Tibial artery (tissue), 4 donors: ENCODE measurements at regions of chr3 and their contacts with region 1.

Region 1: GRCh38 chr3:50272911-50273693 is 4.2 kb downstream of the SEMA3B start:
- DNase-seq: peak; percentile 81 to 91
- H3K4me3 ChIP-seq: peak overlapping the region; percentile 22 to 44
- H3K27ac ChIP-seq: no peak overlapping the region
- H3K4me1 ChIP-seq: peaks cover 0 to 53% (median 33%) of the 10 kb centered on the region in 4 donors
- H3K27me3 ChIP-seq: no peaks in the 10 kb centered on the region
- CTCF ChIP-seq: peak; percentile 98 to 99

Region 2: GRCh38 chr3:50121416-50122032 is 151.6 kb before region 1 on chr3:
- intact Hi-C with region 1: loop called (anchors 10 kb)
- DNase-seq: peak; percentile 57 to 82
- H3K4me3 ChIP-seq: no peak overlapping the region
- H3K27ac ChIP-seq: no peak overlapping the region
- H3K4me1 ChIP-seq: peaks cover 0 to 47% (median 29%) of the 10 kb centered on the region in 4 donors
- H3K27me3 ChIP-seq: no peaks in the 10 kb centered on the region
- CTCF ChIP-seq: peak; percentile 67 to 95

Region 3: GRCh38 chr3:50192689-50193141 is 80.4 kb before region 1 on chr3:
- intact Hi-C with region 1: loop called (anchors 2 kb)
- DNase-seq: peak; percentile 62 to 79
- H3K4me3 ChIP-seq: no peak overlapping the region
- H3K27ac ChIP-seq: no peak overlapping the region
- H3K4me1 ChIP-seq: peaks cover 0 to 28% (median 19%) of the 10 kb centered on the region in 4 donors
- H3K27me3 ChIP-seq: peaks cover 2 to 41% of the 10 kb centered on the region in 2 donors
- CTCF ChIP-seq: peak; percentile 89 to 96

Region 4: GRCh38 chr3:50227390-50228183 is 45.5 kb before region 1 on chr3:
- intact Hi-C with region 1: loop called (anchors 1 kb)
- DNase-seq: peak; percentile 87 to 95
- H3K4me3 ChIP-seq: peak overlapping the region; percentile 67 to 69
- H3K27ac ChIP-seq: peak overlapping the region; percentile 39 to 61
- H3K4me1 ChIP-seq: peaks cover 0 to 32% (median 18%) of the 10 kb centered on the region in 4 donors
- H3K27me3 ChIP-seq: peaks cover 0 to 4% of the 10 kb centered on the region in 2 donors
- CTCF ChIP-seq: peak; percentile 91

Region 5: DNA sequence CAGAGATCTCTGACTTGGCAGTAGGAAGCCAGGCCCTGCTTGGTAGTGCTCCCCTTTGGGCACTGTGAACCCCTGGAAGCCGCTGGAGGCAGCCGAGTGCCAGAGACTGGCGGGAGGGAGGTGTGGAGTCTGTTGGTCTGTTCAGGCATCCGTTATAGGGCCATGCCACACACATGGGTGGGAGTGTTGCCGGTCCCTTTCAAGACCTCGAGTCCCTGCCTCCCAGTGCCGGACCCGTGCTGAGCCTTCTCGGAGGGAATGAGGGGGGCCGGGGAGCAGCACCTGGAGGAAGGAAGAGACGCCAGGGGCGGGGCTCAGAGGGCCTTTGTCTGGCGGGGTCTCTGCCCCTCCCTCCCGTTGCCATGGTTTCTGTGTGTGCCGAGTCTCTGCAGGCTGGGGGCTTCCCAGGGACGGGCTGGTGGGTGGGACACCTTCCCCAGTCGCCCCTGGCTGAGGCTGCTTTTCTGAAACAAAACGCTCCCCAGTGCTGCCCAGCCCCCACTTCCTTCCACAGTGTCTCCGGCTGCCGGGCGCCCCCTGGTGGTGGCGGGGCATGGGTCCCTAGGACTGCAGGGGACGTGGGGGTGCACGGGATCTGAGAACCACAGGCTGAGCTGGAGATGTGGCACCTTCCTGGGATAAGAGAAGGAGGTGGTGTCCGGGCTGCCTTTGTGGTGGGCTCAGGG is 27.1 kb before region 1 on chr3:
- intact Hi-C with region 1: loop called (anchors 5 kb)
- DNase-seq: peak; percentile 92 to 94
- H3K4me3 ChIP-seq: peak overlapping the region; percentile 39 to 49
- H3K27ac ChIP-seq: peak overlapping the region; percentile 63 to 86
- H3K4me1 ChIP-seq: peaks cover 0 to 100% (median 92%) of the 10 kb centered on the region in 4 donors
- H3K27me3 ChIP-seq: no peaks in the 10 kb centered on the region
- CTCF ChIP-seq: peak; percentile 95 to 97

Region 6: DNA sequence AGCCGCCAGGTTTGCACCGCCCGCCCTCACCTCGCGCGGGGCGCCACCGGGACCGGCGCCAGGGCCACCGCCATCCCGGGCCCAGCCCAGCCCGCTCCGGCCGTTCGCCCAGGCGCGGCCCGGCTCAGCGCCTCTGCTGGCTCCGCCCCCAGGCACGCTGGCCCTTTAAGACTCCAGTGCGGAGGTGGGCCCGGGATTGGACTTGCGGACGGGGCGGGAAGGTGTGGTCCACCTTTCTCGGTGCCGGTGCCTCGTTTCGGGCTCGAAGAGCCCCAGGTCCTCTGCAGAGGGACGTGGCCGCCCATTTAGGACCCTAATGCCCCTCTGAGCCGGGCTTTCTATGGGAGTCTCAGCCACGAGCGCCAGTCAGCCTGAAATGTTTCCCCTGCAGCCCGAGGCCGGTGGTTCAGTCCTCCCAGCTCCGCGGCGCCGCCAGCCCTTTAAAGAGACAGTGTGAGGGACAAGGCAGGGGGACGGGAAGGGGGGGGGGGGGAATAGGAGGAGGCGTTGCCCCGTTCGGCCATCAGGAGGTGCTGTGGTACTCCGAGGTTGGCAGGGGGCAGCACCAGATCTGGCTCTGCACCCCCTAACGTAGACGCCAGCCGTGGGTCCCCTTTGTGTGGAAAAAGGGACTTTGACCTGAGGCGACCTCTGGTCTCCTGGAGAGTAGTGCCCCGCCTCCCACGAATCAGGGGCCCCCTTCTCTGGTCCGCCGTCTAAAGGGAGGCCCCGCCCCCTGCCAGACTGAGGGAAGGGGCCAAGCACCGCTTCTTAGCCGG is 48.4 kb after region 1 on chr3:
- intact Hi-C with region 1: no loop called
- DNase-seq: peak; percentile 90 to 94
- H3K4me3 ChIP-seq: peak overlapping the region; percentile 70 to 89
- H3K27ac ChIP-seq: peak overlapping the region; percentile 93
- H3K4me1 ChIP-seq: peaks cover 0 to 67% (median 31%) of the 10 kb centered on the region in 4 donors
- H3K27me3 ChIP-seq: no peaks in the 10 kb centered on the region
- CTCF ChIP-seq: peak; percentile 38 to 44